ENCODE measurements at regions of chr19 and their contacts with region 1.

Region 1: GRCh38 chr19:6737284-6738046 is at the start of gene GPR108:
- DNase-seq: peak; percentile 100
- ATAC-seq: peak; percentile 75
- H3K4me3 Mint-ChIP-seq: peak within 1 kb of the TSS; percentile 98
- H3K27ac Mint-ChIP-seq: peak within 1 kb of the TSS; percentile 99
- H3K4me1 Mint-ChIP-seq: peaks cover 38% of the 10 kb centered on the region
- H3K27me3 Mint-ChIP-seq: no peaks in the 10 kb centered on the region
- CTCF ChIP-seq: no peak
- total RNA-seq, gene GPR108: 58.2 to 64.8 TPM

Region 2: DNA sequence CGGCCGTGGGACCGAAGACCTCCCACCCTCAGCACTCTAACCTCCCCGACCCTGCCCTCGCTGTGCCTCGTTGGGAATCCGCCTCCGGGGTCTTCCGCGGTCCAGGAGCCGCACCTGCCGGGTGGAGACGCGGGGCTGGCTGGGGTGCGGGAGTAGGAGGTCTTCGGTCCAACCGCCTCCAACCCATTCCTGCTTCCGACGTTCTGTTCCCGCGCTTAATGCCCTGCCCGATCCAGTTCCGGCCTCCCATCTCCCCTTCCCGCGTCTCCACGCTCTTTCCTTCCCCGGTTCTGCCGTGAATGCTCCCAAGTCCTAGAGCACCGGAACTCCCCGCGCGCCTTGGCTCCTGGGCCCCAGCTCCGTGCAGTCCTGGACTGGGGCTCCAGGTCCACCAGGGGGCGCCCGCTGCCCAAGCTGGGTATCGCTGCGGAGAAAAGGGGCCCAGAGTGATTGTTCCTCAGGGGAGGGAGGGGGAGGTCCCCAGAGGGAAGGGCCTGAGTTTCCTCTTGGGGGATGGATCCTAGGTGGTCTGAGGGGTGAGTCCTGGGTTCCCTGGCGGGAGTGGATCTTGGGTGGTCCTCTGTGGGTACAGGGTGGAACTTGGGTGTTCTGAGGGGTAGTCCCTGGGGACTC is 220.7 kb before region 1 on chr19:
- CTCF ChIA-PET with region 1: interaction called, 17 read pairs
- POLR2A ChIA-PET with region 1: interaction called, 4 read pairs
- intact Hi-C with region 1: loop called (anchors 10 kb)
- DNase-seq: peak; percentile 95
- ATAC-seq: peak; percentile 76
- H3K4me3 Mint-ChIP-seq: peak overlapping the region; percentile 85
- H3K27ac Mint-ChIP-seq: peak overlapping the region; percentile 89
- H3K4me1 Mint-ChIP-seq: peaks cover 32% of the 10 kb centered on the region
- H3K27me3 Mint-ChIP-seq: peaks cover 1% of the 10 kb centered on the region
- CTCF ChIP-seq: peak; percentile 96

Region 3: GRCh38 chr19:6663236-6664201 is 73.9 kb before region 1 on chr19:
- CTCF ChIA-PET with region 1: interaction called, 12 read pairs
- POLR2A ChIA-PET with region 1: interaction called, 3 read pairs
- intact Hi-C with region 1: loop called (anchors 5 kb)
- DNase-seq: peak; percentile 74
- ATAC-seq: peak; percentile 40
- H3K4me3 Mint-ChIP-seq: no peak overlapping the region
- H3K27ac Mint-ChIP-seq: no peak overlapping the region
- H3K4me1 Mint-ChIP-seq: peaks cover 22% of the 10 kb centered on the region
- H3K27me3 Mint-ChIP-seq: no peaks in the 10 kb centered on the region
- CTCF ChIP-seq: no peak

Region 4: DNA sequence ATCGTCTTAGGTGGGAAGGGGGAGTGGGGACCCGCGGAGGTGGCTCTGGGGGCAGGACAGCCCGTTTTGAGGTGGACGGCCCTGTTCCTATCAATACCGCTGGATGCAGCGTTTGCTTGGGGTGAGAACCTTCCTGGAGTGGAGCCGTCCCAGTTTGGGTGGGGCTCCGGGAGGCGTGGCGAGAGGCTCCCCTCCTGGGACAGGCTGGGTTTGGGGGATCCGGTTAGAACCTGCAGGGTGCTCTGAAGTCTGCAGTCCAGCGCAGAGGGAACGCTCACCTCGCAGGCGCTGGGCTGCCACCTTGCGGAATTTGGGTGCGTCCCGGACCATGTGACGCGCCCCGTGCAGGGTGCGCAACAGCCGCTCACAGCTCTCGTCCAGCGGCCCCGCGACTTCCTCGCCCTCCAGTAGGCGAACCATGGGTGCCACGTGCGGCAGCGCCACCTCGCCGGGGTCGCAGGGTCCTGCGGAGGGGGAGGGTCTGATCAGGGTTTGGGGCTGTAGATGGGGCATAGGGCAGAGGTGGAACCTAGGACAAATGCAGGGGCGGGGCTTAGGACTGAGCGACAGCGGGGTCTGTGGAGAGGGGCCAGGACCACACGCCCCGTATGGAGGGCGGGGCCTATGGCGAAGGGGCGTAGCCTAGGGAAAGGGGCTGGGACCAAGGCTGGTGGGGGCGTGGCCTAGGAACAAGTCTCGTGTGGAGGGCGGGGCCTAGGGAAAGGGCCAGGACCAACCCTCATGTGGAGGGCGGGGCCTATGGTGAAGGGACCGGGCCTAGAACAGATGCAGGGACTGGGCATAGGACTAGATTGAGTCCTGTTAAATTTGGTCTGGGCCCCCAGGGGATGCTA is 15.9 kb after region 1 on chr19:
- CTCF ChIA-PET with region 1: interaction called, 10 read pairs
- POLR2A ChIA-PET with region 1: interaction called, 3 read pairs
- intact Hi-C with region 1: no loop called
- DNase-seq: peak; percentile 91
- ATAC-seq: peak; percentile 97
- H3K4me3 Mint-ChIP-seq: peak overlapping the region; percentile 68
- H3K27ac Mint-ChIP-seq: peak overlapping the region; percentile 86
- H3K4me1 Mint-ChIP-seq: peaks cover 14% of the 10 kb centered on the region
- H3K27me3 Mint-ChIP-seq: no peaks in the 10 kb centered on the region
- CTCF ChIP-seq: no peak

Region 5: GRCh38 chr19:6862673-6863078 is 125.2 kb after region 1 on chr19:
- CTCF ChIA-PET with region 1: interaction called, 73 read pairs
- POLR2A ChIA-PET with region 1: interaction called, 14 read pairs
- intact Hi-C with region 1: loop called (anchors 1 kb)
- DNase-seq: peak; percentile 97
- ATAC-seq: peak; percentile 88
- H3K4me3 Mint-ChIP-seq: peak overlapping the region; percentile 77
- H3K27ac Mint-ChIP-seq: peak overlapping the region; percentile 79
- H3K4me1 Mint-ChIP-seq: peaks cover 14% of the 10 kb centered on the region
- H3K27me3 Mint-ChIP-seq: no peaks in the 10 kb centered on the region
- CTCF ChIP-seq: peak; percentile 81

Measured in activated CD8-positive, alpha-beta T cell treated with anti-CD3 and anti-CD28 coated beads for 36 hours (primary cell).